ENCODE measurements at regions of chr3 and their contacts with region 1.

Region 1: DNA sequence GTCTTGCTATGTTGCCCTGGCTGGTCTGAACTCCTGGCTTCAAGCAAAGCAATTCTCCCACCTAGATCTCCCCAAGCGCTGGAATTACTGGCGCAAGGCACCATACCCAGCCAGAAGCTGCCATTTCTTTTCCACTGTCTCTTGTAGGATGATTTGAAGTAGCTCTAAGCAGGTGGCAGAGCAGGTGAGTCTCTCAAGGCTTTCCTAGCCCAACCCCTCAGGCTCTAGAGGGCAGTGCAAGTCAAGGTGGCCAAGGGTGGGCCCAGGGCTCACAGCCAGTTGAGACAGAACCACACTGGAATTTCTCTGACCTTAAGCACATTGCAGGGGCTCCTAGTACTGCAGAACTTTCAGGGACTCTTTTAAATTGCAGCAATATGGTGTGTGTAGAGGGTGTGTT is 15.6 kb upstream of the DAG1 start:
- DNase-seq: no peak
- ATAC-seq: no peak
- H3K4me3 Mint-ChIP-seq: no peak overlapping the region
- H3K27ac Mint-ChIP-seq: no peak overlapping the region
- H3K4me1 Mint-ChIP-seq: no peaks in the 10 kb centered on the region
- H3K27me3 Mint-ChIP-seq: no peaks in the 10 kb centered on the region

Region 2: DNA sequence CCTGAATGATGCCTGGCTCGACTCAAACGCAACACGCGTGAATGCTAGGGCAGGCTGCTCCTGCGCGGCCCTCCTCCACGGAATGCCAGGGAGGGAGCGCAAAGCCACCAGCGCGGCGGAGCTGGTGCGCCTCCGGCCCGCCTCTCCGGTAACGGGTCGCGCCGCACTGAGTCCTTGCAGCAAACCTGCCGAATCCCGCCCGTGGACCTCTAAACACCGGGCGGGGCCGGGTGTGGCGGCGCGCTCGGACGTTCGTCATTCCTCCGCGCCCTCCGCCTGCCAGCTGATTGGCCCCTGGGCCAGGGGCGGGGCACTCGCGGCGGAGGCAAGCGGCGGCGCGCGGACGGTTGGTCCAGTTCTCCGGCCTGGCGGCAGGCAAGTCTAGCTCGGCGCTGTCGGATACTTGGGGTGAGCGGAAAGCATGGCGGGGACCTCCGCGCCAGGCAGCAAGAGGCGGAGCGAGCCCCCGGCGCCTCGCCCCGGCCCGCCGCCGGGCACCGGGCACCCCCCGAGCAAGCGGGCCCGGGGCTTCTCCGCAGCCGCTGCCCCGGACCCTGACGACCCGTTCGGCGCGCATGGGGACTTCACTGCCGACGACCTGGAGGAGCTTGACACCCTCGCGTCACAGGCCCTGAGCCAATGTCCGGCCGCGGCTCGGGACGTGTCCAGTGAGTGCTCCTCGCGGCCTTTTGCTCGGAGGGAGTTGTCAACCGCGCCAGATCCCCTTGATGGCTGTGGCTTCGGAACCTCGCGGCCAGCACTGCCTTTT is 1007.8 kb before region 1 on chr3 and contains the start of gene ATRIP:
- CTCF ChIA-PET with region 1: no interaction called
- POLR2A ChIA-PET with region 1: no interaction called
- intact Hi-C with region 1: no loop called
- DNase-seq: peak; percentile 91
- ATAC-seq: peak; percentile 98
- H3K4me3 Mint-ChIP-seq: peak within 1 kb of the TSS; percentile 83
- H3K27ac Mint-ChIP-seq: peak within 1 kb of the TSS; percentile 79
- H3K4me1 Mint-ChIP-seq: peaks cover 42% of the 10 kb centered on the region
- H3K27me3 Mint-ChIP-seq: no peaks in the 10 kb centered on the region
- total RNA-seq, gene ATRIP: 16.8 to 21.0 TPM

Region 3: GRCh38 chr3:48989796-48990635 is 464.4 kb before region 1 on chr3 and contains the start of gene P4HTM:
- CTCF ChIA-PET with region 1: interaction called, 4 read pairs
- POLR2A ChIA-PET with region 1: no interaction called
- intact Hi-C with region 1: loop called in 1 of 2 experiments (anchors 2 kb)
- DNase-seq: peak; percentile 90
- ATAC-seq: peak; percentile 76
- H3K4me3 Mint-ChIP-seq: peak within 1 kb of the TSS; percentile 95
- H3K27ac Mint-ChIP-seq: peak within 1 kb of the TSS; percentile 93
- H3K4me1 Mint-ChIP-seq: peaks cover 35% of the 10 kb centered on the region
- H3K27me3 Mint-ChIP-seq: no peaks in the 10 kb centered on the region
- total RNA-seq, gene P4HTM: 25.7 to 30.4 TPM

Region 4: DNA sequence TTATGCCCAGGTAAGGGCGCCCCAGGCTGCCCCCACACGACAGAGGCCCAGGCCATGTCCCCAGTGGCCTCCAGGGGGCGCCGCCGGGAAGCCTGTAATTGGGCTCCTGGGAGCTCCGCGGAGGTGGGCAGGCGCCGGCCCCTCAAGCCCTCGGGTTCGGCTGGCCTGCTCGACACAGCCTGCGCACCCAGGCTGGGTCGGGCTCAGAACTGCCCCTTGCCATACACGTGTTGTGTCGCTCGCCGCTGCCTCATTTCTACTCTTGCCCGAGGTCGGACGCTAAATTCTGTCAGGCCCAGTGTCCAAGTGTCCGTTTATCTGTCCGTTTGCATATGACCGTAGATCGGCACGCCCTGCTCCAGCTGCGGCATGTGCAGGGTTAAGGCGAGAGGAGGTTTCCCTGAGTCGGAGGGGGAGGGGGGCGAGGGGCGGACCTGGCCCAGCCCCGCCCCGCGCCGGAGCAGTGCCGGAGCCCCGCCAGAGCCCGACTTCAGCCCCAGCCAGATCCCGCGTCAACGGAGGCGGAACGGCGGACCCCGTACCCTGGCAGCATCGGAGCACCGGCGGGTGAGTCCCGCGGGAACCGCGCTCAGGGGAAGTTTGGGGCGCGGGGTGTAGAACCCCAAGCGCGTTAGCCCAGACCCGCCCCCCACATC is 283.2 kb before region 1 on chr3 and contains the start of gene KLHDC8B:
- CTCF ChIA-PET with region 1: interaction called, 12 read pairs
- POLR2A ChIA-PET with region 1: interaction called, 3 read pairs
- intact Hi-C with region 1: loop called (anchors 1 kb)
- DNase-seq: peak; percentile 92
- ATAC-seq: peak; percentile 87
- H3K4me3 Mint-ChIP-seq: peak within 1 kb of the TSS; percentile 78
- H3K27ac Mint-ChIP-seq: peak within 1 kb of the TSS; percentile 76
- H3K4me1 Mint-ChIP-seq: peaks cover 17% of the 10 kb centered on the region
- H3K27me3 Mint-ChIP-seq: no peaks in the 10 kb centered on the region
- total RNA-seq, gene KLHDC8B: 1.2 to 3.1 TPM

Region 5: GRCh38 chr3:49295489-49296058 is 158.9 kb before region 1 on chr3:
- CTCF ChIA-PET with region 1: interaction called, 7 read pairs
- POLR2A ChIA-PET with region 1: interaction called, 3 read pairs
- intact Hi-C with region 1: loop called (anchors 1 kb)
- DNase-seq: peak; percentile 58
- ATAC-seq: peak; percentile 78
- H3K4me3 Mint-ChIP-seq: no peak overlapping the region
- H3K27ac Mint-ChIP-seq: peak overlapping the region; percentile 42
- H3K4me1 Mint-ChIP-seq: no peaks in the 10 kb centered on the region
- H3K27me3 Mint-ChIP-seq: no peaks in the 10 kb centered on the region

Region 6: GRCh38 chr3:49358217-49358883 is 96.1 kb before region 1 on chr3 and contains the start of gene GPX1:
- CTCF ChIA-PET with region 1: no interaction called
- POLR2A ChIA-PET with region 1: no interaction called
- intact Hi-C with region 1: loop called in 1 of 2 experiments (anchors 1 kb)
- DNase-seq: peak; percentile 92
- ATAC-seq: peak; percentile 85
- H3K4me3 Mint-ChIP-seq: peak within 1 kb of the TSS; percentile 94
- H3K27ac Mint-ChIP-seq: peak within 1 kb of the TSS; percentile 98
- H3K4me1 Mint-ChIP-seq: peaks cover 18% of the 10 kb centered on the region
- H3K27me3 Mint-ChIP-seq: no peaks in the 10 kb centered on the region
- total RNA-seq, gene GPX1: 182 to 306 TPM

Region 7: DNA sequence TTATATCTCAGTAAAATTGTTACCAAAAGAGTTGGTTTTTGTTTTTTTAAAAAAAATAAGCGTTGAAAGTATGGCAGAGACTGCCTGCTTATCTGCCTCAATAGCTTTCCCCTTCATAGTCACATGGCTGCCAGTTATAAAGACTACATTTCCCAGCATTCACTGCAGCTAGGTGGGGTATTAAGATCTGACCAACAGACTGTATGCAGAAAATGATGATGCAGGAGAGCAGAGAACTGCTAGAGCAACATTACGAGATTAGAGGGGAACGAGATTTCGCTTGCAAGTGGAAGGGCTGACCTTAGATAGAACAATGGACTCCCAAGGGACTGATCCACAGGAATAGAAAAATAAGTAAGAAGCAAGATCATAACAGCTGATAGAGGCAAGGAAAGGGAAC is 57.0 kb before region 1 on chr3:
- CTCF ChIA-PET with region 1: interaction called, 10 read pairs
- POLR2A ChIA-PET with region 1: no interaction called
- intact Hi-C with region 1: no loop called
- DNase-seq: no peak
- ATAC-seq: peak; percentile 61
- H3K4me3 Mint-ChIP-seq: no peak overlapping the region
- H3K27ac Mint-ChIP-seq: no peak overlapping the region
- H3K4me1 Mint-ChIP-seq: peaks cover 64% of the 10 kb centered on the region
- H3K27me3 Mint-ChIP-seq: no peaks in the 10 kb centered on the region

Region 8: GRCh38 chr3:49626101-49626581 is 171.7 kb after region 1 on chr3:
- CTCF ChIA-PET with region 1: no interaction called
- POLR2A ChIA-PET with region 1: no interaction called
- intact Hi-C with region 1: no loop called
- DNase-seq: peak; percentile 16
- ATAC-seq: peak; percentile 53
- H3K4me3 Mint-ChIP-seq: no peak overlapping the region
- H3K27ac Mint-ChIP-seq: no peak overlapping the region
- H3K4me1 Mint-ChIP-seq: peaks cover 5% of the 10 kb centered on the region
- H3K27me3 Mint-ChIP-seq: peaks cover 6% of the 10 kb centered on the region